Heart right ventricle (tissue), 16 donors: ENCODE measurements at regions of chr7 and their contacts with region 1.

Region 1: DNA sequence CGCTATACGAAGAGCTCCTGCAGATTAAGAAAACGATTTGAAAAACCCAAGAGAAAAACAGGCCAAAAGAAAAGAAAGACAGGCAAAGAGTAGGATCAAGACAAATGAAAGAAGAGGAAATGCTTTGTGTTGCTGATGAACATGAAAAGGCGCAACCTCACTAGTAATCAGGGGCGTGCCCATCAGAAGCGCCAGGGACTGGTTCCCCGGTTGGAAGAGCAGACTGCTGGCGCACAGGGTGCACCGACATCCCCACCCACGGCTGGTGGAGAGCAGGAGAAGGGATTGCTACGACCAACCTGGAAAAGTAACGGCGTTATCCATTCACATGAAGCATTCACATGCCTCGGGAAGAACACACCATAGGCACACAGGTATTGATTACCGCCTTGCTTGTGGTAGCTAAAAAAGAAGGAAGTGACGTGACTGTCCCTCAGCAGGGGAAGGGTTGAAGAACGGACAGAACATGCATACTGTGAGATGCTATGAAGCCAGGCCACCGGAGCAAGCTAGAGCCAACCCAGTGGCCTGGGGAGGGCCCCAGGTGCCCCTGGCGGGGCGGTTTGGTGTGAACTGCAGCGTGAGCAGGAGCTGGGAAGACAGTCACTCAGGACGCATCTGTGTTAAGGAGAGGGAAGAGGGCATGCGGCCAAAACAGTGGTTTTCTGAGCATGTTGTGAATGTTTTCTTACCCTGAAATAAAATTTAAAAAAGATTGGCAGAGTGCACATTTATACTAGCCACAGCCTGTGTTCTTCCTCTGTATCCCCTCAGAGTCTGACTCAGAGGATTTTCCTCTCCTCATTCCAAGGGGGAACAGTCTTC is 18.3 kb downstream of the AGAP3 start:
- DNase-seq: no peak
- ATAC-seq: peak in 1 of 8 donors; percentile 5
- H3K4me3 ChIP-seq: no peak overlapping the region
- H3K27ac ChIP-seq: peak overlapping the region in 1 of 10 donors; percentile 15
- H3K4me1 ChIP-seq: peaks cover 0 to 40% (median 17%) of the 10 kb centered on the region in 9 donors
- H3K27me3 ChIP-seq: no peaks in the 10 kb centered on the region
- CTCF ChIP-seq: no peak

Region 2: DNA sequence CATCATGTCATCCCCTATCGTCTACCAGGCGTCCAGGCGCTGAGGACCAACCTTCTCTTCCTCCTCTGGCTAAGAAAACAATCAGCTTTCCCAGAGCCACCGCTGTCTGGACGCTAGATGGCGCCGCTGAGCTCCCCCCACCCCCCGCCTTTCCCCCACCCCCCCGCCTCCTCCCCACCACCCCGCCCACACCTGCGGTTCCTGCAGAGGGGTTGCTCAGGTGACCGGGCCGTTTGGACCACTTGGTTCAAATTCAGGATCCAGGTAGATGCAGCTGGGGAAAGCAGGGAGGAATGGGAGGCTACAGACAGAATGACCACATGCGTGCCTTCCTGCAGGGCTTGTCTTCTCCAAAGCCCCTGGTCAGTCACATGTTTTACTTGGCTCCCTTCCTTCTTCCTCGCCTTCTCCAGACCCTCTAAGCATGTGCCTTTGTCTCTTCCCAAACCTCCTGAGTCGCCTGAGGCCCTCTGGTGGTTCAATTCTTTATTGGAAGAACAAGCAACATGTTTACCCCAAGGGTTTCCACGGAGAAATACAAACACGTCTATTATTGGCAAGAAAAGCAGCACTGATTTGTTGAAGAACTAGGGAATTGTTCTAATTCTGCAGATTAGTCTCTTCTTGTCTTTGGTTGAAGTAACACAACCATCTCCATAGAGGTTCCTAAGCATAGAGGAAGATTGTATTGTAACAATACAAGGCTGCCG is 227.7 kb before region 1 on chr7:
- intact Hi-C with region 1: loop called in 1 of 10 experiments (anchors 10 kb)
- DNase-seq: peak; percentile 56 to 81
- ATAC-seq: peak; percentile 76 to 96 (median 88)
- H3K4me3 ChIP-seq: no peak overlapping the region
- H3K27ac ChIP-seq: peak overlapping the region in 1 of 10 donors; percentile 31
- H3K4me1 ChIP-seq: peaks cover 0 to 13% (median 6%) of the 10 kb centered on the region in 9 donors
- H3K27me3 ChIP-seq: peaks cover 0 to 4% (median 0%) of the 10 kb centered on the region in 7 donors
- CTCF ChIP-seq: peak; percentile 38 to 70 (median 58)

Region 3: DNA sequence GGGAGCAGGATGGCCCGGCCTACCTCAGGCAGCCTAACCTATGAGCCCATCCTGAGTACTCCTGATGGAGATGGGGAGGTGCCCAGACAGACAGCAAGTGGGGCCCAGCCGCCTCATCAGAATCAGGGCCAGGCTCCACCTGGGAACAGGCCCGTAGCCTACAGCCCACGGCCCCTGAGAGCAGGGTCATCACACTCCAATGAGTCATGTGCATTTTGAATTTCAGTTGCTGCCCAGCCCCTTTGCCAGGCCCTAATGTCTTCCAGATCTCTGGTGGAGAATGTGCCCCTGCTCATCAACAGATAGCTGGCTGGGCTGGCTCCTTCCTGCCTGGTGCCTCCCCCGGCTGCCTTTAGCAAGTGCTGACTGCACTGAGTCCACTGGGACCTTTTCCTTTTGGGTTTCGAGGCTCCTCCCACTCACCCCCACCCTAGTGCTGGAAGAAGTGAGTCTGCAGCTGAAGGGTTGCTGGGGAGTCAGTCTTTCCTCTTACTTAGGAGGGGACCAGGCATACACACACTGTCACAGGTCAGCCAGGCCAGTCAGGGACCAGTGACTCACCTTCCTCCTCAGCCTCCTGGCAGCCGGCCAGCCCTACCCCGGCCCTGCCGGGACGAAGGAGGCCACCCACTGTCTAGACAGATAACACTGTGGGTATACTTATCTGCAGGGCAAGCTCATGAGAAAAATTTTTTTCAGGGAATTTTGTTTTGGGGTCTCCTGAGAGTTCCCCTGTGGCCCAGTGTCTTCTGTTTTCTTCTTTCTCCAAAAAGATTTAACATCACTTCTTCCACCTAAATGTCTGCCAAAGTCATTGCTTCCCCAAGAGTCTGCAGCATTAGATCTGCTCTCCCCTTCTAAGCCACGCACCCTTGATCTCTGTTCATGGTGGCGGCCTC is 65.4 kb before region 1 on chr7:
- intact Hi-C with region 1: loop called in 3 of 10 experiments (anchors 10 kb)
- DNase-seq: peak; percentile 65 to 70
- ATAC-seq: peak in 7 of 8 donors; percentile 41 to 88 (median 68)
- H3K4me3 ChIP-seq: no peak overlapping the region
- H3K27ac ChIP-seq: peak overlapping the region in 6 of 10 donors; percentile 30 to 61 (median 36)
- H3K4me1 ChIP-seq: peaks cover 10 to 33% (median 22%) of the 10 kb centered on the region in 9 donors
- H3K27me3 ChIP-seq: no peaks in the 10 kb centered on the region
- CTCF ChIP-seq: no peak

Region 4: GRCh38 chr7:151046603-151047504 is 57.8 kb before region 1 on chr7:
- intact Hi-C with region 1: loop called in 1 of 10 experiments (anchors 10 kb)
- DNase-seq: no peak
- ATAC-seq: no peak
- H3K4me3 ChIP-seq: no peak overlapping the region
- H3K27ac ChIP-seq: no peak overlapping the region
- H3K4me1 ChIP-seq: peaks cover 3 to 16% (median 9%) of the 10 kb centered on the region in 9 donors
- H3K27me3 ChIP-seq: peaks cover 0 to 15% (median 0%) of the 10 kb centered on the region in 7 donors
- CTCF ChIP-seq: no peak

Region 5: GRCh38 chr7:151232091-151232916 is 127.7 kb after region 1 on chr7 and contains the start of gene CHPF2:
- intact Hi-C with region 1: no loop called
- DNase-seq: peak; percentile 92 to 94
- ATAC-seq: peak; percentile 92 to 97 (median 96)
- H3K4me3 ChIP-seq: peak within 1 kb of the TSS; percentile 71 to 99 (median 96)
- H3K27ac ChIP-seq: peak within 1 kb of the TSS; percentile 8 to 94 (median 88)
- H3K4me1 ChIP-seq: peaks cover 12 to 45% (median 27%) of the 10 kb centered on the region in 9 donors
- H3K27me3 ChIP-seq: no peaks in the 10 kb centered on the region
- CTCF ChIP-seq: no peak
- total RNA-seq, gene CHPF2: 12.1 to 22.4 (median 17.4) TPM